MCF 10A (cell line): ENCODE measurements at regions of chr4 and their contacts with region 1.

Region 1: GRCh38 chr4:78569291-78569821 is 17.8 kb downstream of the ANXA3 start:
- DNase-seq: peak; percentile 54
- H3K4me3 Mint-ChIP-seq: peak overlapping the region; percentile 48
- H3K27ac Mint-ChIP-seq: peak overlapping the region; percentile 93
- H3K4me1 Mint-ChIP-seq: peaks cover 48% of the 10 kb centered on the region
- H3K27me3 Mint-ChIP-seq: no peaks in the 10 kb centered on the region
- CTCF ChIP-seq: no peak

Region 2: GRCh38 chr4:78297116-78297800 is 272.1 kb before region 1 on chr4:
- CTCF ChIA-PET with region 1: no interaction called
- POLR2A ChIA-PET with region 1: no interaction called
- intact Hi-C with region 1: no loop called
- DNase-seq: no peak
- H3K4me3 Mint-ChIP-seq: no peak overlapping the region
- H3K27ac Mint-ChIP-seq: no peak overlapping the region
- H3K4me1 Mint-ChIP-seq: peaks cover 33% of the 10 kb centered on the region
- H3K27me3 Mint-ChIP-seq: no peaks in the 10 kb centered on the region
- CTCF ChIP-seq: no peak

Region 3: GRCh38 chr4:78369679-78370078 is 199.7 kb before region 1 on chr4:
- CTCF ChIA-PET with region 1: no interaction called
- POLR2A ChIA-PET with region 1: no interaction called
- intact Hi-C with region 1: no loop called
- DNase-seq: no peak
- H3K4me3 Mint-ChIP-seq: no peak overlapping the region
- H3K27ac Mint-ChIP-seq: no peak overlapping the region
- H3K4me1 Mint-ChIP-seq: no peaks in the 10 kb centered on the region
- H3K27me3 Mint-ChIP-seq: no peaks in the 10 kb centered on the region
- CTCF ChIP-seq: no peak

Region 4: GRCh38 chr4:78558421-78558820 is 10.9 kb before region 1 on chr4:
- CTCF ChIA-PET with region 1: interaction called, 3 read pairs
- POLR2A ChIA-PET with region 1: interaction called, 38 read pairs
- intact Hi-C with region 1: no loop called
- DNase-seq: no peak
- H3K4me3 Mint-ChIP-seq: no peak overlapping the region
- H3K27ac Mint-ChIP-seq: peak overlapping the region; percentile 93
- H3K4me1 Mint-ChIP-seq: peaks cover 62% of the 10 kb centered on the region
- H3K27me3 Mint-ChIP-seq: no peaks in the 10 kb centered on the region
- CTCF ChIP-seq: no peak